GM10248 (cell line): ENCODE measurements at regions of chr17 and their contacts with region 1.

Region 1: GRCh38 chr17:58556833-58557250 is 42.4 kb upstream of the MTMR4 start:
- DNase-seq: no peak
- CTCF ChIP-seq: no peak

Region 2: GRCh38 chr17:58541249-58541648 is 15.6 kb before region 1 on chr17:
- CTCF ChIA-PET with region 1: interaction called, 28 read pairs
- POLR2A ChIA-PET with region 1: interaction called, 3 read pairs
- DNase-seq: peak; percentile 47
- CTCF ChIP-seq: peak; percentile 50